ENCODE measurements at regions of chr14 and their contacts with region 1.

Region 1: GRCh38 chr14:66624299-66624937 is 116.5 kb downstream of the GPHN start:
- DNase-seq: peak; percentile 21
- ATAC-seq: peak; percentile 98
- H3K4me3 ChIP-seq: no peak overlapping the region
- H3K27ac ChIP-seq: no peak overlapping the region
- H3K4me1 ChIP-seq: no peaks in the 10 kb centered on the region
- H3K27me3 ChIP-seq: no peaks in the 10 kb centered on the region
- CTCF ChIP-seq: peak; percentile 64 to 72 (median 67); a peak in 5 of 6 replicates
- EP300 ChIP-seq: no peak
- POLR2A ChIP-seq: no peak
- RAD21 ChIP-seq: peak; percentile 93

Region 2: GRCh38 chr14:66359500-66359899 is 264.9 kb before region 1 on chr14:
- CTCF ChIA-PET with region 1: interaction called, 3 read pairs
- POLR2A ChIA-PET with region 1: no interaction called
- RAD21 ChIA-PET with region 1: interaction called, 6 read pairs
- SMC1A ChIA-PET with region 1: interaction called, 6 read pairs
- in situ Hi-C with region 1: no loop called
- intact Hi-C with region 1: loop called (anchors 10 kb)
- DNase-seq: peak; percentile 15
- ATAC-seq: peak; percentile 24; the same call in 2 of the 3 replicates
- H3K4me3 ChIP-seq: no peak overlapping the region
- H3K27ac ChIP-seq: no peak overlapping the region
- H3K4me1 ChIP-seq: no peaks in the 10 kb centered on the region
- H3K27me3 ChIP-seq: no peaks in the 10 kb centered on the region
- CTCF ChIP-seq: peak; percentile 21 to 66 (median 53); a peak in 5 of 6 replicates
- EP300 ChIP-seq: no peak
- POLR2A ChIP-seq: no peak
- RAD21 ChIP-seq: peak; percentile 97

Region 3: DNA sequence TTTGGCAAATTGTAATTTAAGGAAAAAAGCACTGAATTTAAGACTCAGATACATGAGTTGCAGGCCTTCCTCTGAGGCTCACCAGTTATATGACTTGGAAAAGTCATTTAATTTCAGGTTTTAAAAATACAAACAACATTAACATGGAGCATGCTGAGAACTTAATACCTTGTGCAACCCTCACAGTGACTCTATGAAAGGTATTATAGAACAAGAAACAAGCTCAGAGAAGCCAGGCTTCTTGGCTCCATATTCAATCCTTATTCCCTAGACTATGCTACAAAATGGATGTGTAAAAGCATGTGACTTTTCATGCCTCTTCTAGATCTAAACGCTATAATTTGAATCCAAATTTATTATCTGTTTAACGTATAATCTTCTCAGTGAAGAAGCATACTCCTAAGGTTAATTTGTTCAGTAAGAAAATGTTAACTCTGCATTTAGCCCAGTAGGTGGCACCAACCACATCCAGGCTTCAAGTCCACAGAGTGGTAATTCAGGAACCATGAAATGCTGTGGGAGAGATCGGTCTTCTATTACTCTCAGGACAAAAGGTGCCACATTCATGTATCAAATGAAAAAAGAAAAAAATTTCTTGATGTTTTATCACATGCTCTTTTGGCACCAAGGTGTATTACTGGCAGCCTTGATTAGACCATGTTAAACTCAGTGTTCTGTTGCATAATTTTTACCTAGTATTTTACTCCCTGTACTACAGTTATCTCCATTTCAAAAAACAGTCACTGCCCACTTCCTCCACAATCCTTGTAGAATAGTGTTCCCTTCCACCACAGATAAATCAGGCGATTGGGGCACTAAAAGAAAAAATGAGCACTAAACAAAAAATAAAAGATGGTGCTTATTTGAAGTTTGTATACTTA is 129.0 kb before region 1 on chr14:
- CTCF ChIA-PET with region 1: interaction called, 24 read pairs
- POLR2A ChIA-PET with region 1: interaction called, 8 read pairs
- RAD21 ChIA-PET with region 1: interaction called, 15 read pairs
- SMC1A ChIA-PET with region 1: interaction called, 19 read pairs
- in situ Hi-C with region 1: no loop called
- intact Hi-C with region 1: loop called (anchors 2 kb)
- DNase-seq: peak; percentile 45
- ATAC-seq: peak; percentile 96
- H3K4me3 ChIP-seq: no peak overlapping the region
- H3K27ac ChIP-seq: no peak overlapping the region
- H3K4me1 ChIP-seq: peaks cover 3% of the 10 kb centered on the region; the same call in 1 of the 2 replicates
- H3K27me3 ChIP-seq: no peaks in the 10 kb centered on the region
- CTCF ChIP-seq: peak; percentile 70 to 84 (median 84)
- EP300 ChIP-seq: no peak
- POLR2A ChIP-seq: no peak
- RAD21 ChIP-seq: peak; percentile 87

Region 4: GRCh38 chr14:66638689-66639088 is 14.3 kb after region 1 on chr14:
- CTCF ChIA-PET with region 1: interaction called, 10 read pairs
- POLR2A ChIA-PET with region 1: no interaction called
- RAD21 ChIA-PET with region 1: interaction called, 8 read pairs
- SMC1A ChIA-PET with region 1: interaction called, 15 read pairs
- in situ Hi-C with region 1: no loop called
- intact Hi-C with region 1: no loop called
- DNase-seq: no peak
- ATAC-seq: no peak
- H3K4me3 ChIP-seq: no peak overlapping the region
- H3K27ac ChIP-seq: no peak overlapping the region
- H3K4me1 ChIP-seq: no peaks in the 10 kb centered on the region
- H3K27me3 ChIP-seq: no peaks in the 10 kb centered on the region
- CTCF ChIP-seq: no peak
- EP300 ChIP-seq: no peak
- POLR2A ChIP-seq: no peak
- RAD21 ChIP-seq: no peak

Region 5: GRCh38 chr14:66662374-66662773 is 38.0 kb after region 1 on chr14:
- CTCF ChIA-PET with region 1: interaction called, 17 read pairs
- POLR2A ChIA-PET with region 1: no interaction called
- RAD21 ChIA-PET with region 1: interaction called, 6 read pairs
- SMC1A ChIA-PET with region 1: interaction called, 32 read pairs
- in situ Hi-C with region 1: no loop called
- intact Hi-C with region 1: no loop called
- DNase-seq: no peak
- ATAC-seq: peak; percentile 46; the same call in 1 of the 3 replicates
- H3K4me3 ChIP-seq: no peak overlapping the region
- H3K27ac ChIP-seq: no peak overlapping the region
- H3K4me1 ChIP-seq: no peaks in the 10 kb centered on the region
- H3K27me3 ChIP-seq: no peaks in the 10 kb centered on the region
- CTCF ChIP-seq: peak in 2 of 3 experiments; percentile 7 to 25; a peak in 2 of 6 replicates
- EP300 ChIP-seq: no peak
- POLR2A ChIP-seq: no peak
- RAD21 ChIP-seq: peak; percentile 36; the same call in 1 of the 2 replicates

Region 6: DNA sequence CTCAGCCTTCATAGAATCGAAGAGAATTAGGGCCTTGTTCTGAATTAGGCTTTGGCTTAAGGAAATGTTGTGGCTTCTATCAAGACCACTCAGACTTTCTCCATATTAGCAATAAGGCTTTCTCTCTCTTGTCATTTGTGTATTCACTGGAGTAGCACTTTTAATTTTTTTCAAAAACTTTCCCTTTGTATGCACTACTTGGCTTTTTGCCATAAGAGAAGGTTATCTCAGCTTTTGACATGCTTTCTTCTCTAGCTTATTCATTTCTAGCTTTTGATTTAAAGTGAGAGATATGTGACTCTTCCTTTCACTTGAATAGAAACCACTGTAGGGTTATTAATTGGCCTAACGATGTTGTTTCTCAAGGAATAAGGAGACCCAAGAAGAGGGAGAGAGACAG is 127.7 kb after region 1 on chr14:
- CTCF ChIA-PET with region 1: interaction called, 47 read pairs
- POLR2A ChIA-PET with region 1: no interaction called
- RAD21 ChIA-PET with region 1: interaction called, 5 read pairs
- SMC1A ChIA-PET with region 1: interaction called, 30 read pairs
- in situ Hi-C with region 1: no loop called
- intact Hi-C with region 1: no loop called
- DNase-seq: peak; percentile 41
- ATAC-seq: peak; percentile 82
- H3K4me3 ChIP-seq: no peak overlapping the region
- H3K27ac ChIP-seq: no peak overlapping the region
- H3K4me1 ChIP-seq: peaks cover 11% of the 10 kb centered on the region; the same call in 1 of the 2 replicates
- H3K27me3 ChIP-seq: no peaks in the 10 kb centered on the region
- CTCF ChIP-seq: no peak
- EP300 ChIP-seq: peak in 1 of 2 experiments; percentile 23; a peak in 1 of 4 replicates
- POLR2A ChIP-seq: no peak
- RAD21 ChIP-seq: no peak

Region 7: GRCh38 chr14:67137744-67138371 is 513.4 kb after region 1 on chr14:
- CTCF ChIA-PET with region 1: interaction called, 4 read pairs
- POLR2A ChIA-PET with region 1: no interaction called
- RAD21 ChIA-PET with region 1: interaction called, 3 read pairs
- SMC1A ChIA-PET with region 1: no interaction called
- in situ Hi-C with region 1: no loop called
- intact Hi-C with region 1: loop called (anchors 5 kb)
- DNase-seq: no peak
- ATAC-seq: peak; percentile 56; the same call in 2 of the 3 replicates
- H3K4me3 ChIP-seq: no peak overlapping the region
- H3K27ac ChIP-seq: no peak overlapping the region
- H3K4me1 ChIP-seq: no peaks in the 10 kb centered on the region
- H3K27me3 ChIP-seq: no peaks in the 10 kb centered on the region
- CTCF ChIP-seq: peak; percentile 37 to 42 (median 38); a peak in 3 of 6 replicates
- EP300 ChIP-seq: no peak
- POLR2A ChIP-seq: no peak
- RAD21 ChIP-seq: peak; percentile 56